AG04450 (cell line): ENCODE measurements at regions of chr15 and their contacts with region 1.

Region 1: GRCh38 chr15:29978411-29979382 is 104.1 kb upstream of the GOLGA8J start:
- DNase-seq: no peak
- H3K4me3 ChIP-seq: no peak overlapping the region
- H3K27ac ChIP-seq: no peak overlapping the region
- H3K27me3 ChIP-seq: peaks cover 2% of the 10 kb centered on the region
- CTCF ChIP-seq: no peak

Region 2: GRCh38 chr15:29773816-29774215 is 204.9 kb before region 1 on chr15:
- CTCF ChIA-PET with region 1: interaction called, 11 read pairs
- POLR2A ChIA-PET with region 1: no interaction called
- DNase-seq: no peak
- H3K4me3 ChIP-seq: no peak overlapping the region
- H3K27ac ChIP-seq: no peak overlapping the region
- H3K27me3 ChIP-seq: no peaks in the 10 kb centered on the region
- CTCF ChIP-seq: no peak

Region 3: DNA sequence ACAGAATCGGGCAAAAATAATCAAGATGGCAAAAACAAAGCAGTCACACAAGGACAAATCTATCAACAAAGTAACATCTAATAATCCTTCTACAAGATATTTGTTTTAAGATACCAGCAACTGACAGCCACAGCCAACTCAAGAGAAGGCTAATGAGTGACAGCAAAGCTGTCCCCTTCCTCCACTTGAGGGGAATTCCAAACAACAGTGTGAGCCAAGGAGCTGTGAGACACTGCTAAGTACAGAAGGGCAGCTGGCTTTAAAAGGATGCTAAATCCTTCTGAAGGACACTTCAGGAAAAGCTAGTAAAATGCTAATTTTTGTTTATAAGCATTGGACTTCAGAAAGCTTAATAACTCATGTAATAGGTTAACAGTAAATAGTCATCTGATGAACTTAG is 16.3 kb before region 1 on chr15:
- CTCF ChIA-PET with region 1: no interaction called
- POLR2A ChIA-PET with region 1: no interaction called
- DNase-seq: no peak
- H3K4me3 ChIP-seq: no peak overlapping the region
- H3K27ac ChIP-seq: no peak overlapping the region
- H3K27me3 ChIP-seq: peaks cover 26% of the 10 kb centered on the region
- CTCF ChIP-seq: no peak

Region 4: GRCh38 chr15:29998033-29998432 is 19.3 kb after region 1 on chr15:
- CTCF ChIA-PET with region 1: no interaction called
- POLR2A ChIA-PET with region 1: no interaction called
- DNase-seq: no peak
- H3K4me3 ChIP-seq: no peak overlapping the region
- H3K27ac ChIP-seq: no peak overlapping the region
- H3K27me3 ChIP-seq: peaks cover 9% of the 10 kb centered on the region
- CTCF ChIP-seq: no peak